ENCODE measurements at regions of chr9 and their contacts with region 1.

Region 1: GRCh38 chr9:69174616-69175463 is 763 bp downstream of the TJP2 start:
- DNase-seq: peak; percentile 57 to 81 (median 81)
- H3K4me3 ChIP-seq: peak overlapping the region; percentile 61 to 89 (median 80)
- H3K27ac ChIP-seq: peak overlapping the region in 1 of 2 experiments; percentile 46
- H3K4me1 ChIP-seq: peaks cover 2 to 52% (median 35%) of the 10 kb centered on the region in 4 experiments
- H3K27me3 ChIP-seq: no peaks in the 10 kb centered on the region

Region 2: GRCh38 chr9:69085569-69086283 is 89.1 kb before region 1 on chr9:
- CTCF ChIA-PET with region 1: no interaction called
- POLR2A ChIA-PET with region 1: no interaction called
- DNase-seq: no peak
- H3K4me3 ChIP-seq: no peak overlapping the region
- H3K27ac ChIP-seq: no peak overlapping the region
- H3K4me1 ChIP-seq: no peaks in the 10 kb centered on the region
- H3K27me3 ChIP-seq: no peaks in the 10 kb centered on the region

Region 3: DNA sequence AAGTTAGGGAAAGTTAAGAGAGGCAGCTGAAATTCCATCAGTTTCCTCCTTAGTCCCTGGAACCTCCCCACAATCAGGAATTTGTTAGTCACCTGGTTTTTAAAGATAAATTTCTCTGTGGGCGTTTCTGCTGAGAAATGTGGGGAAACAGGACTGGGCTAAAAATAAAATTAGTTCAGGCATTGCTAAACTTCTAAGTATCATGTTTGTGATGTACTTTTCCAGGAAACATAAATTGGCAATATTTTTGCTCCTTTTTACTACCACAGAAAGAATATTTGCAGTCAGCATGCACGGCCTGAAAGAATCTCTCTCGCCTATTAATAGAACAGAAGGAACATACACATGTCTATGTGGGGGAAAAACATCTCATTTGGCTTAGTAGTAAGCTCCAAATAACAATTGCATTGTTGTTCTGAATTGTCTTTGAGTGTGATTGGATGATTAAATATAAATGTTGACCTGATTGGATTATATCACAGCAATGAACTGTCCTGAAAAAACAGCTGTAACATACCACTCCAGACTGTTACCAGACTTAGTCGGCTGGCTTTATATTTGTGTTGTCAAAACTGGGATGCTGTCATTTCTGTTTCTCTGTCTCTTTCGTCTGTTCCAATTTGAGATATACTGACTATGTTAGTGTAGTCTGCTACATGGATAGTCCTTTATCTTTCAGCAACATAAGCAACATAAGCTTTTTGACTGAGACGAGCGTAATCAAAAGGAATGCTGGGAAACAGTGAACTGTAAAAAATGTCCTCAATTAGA is 12.2 kb after region 1 on chr9:
- CTCF ChIA-PET with region 1: interaction called, 17 read pairs
- POLR2A ChIA-PET with region 1: no interaction called
- DNase-seq: peak in 2 of 3 donors; percentile 30 to 54
- H3K4me3 ChIP-seq: peak overlapping the region in 1 of 7 experiments; percentile 1
- H3K27ac ChIP-seq: peak overlapping the region in 1 of 2 experiments; percentile 46
- H3K4me1 ChIP-seq: peaks cover 2 to 39% (median 21%) of the 10 kb centered on the region in 4 experiments
- H3K27me3 ChIP-seq: no peaks in the 10 kb centered on the region